ENCODE measurements at regions of chr11 and their contacts with region 1.

Region 1: GRCh38 chr11:10878408-10879214 is 20.8 kb upstream of the ZBED5 start:
- DNase-seq: peak; percentile 69
- H3K4me3 ChIP-seq: no peak overlapping the region
- H3K27ac ChIP-seq: no peak overlapping the region
- H3K4me1 ChIP-seq: no peaks in the 10 kb centered on the region
- H3K27me3 ChIP-seq: no peaks in the 10 kb centered on the region
- CTCF ChIP-seq: peak; percentile 68 to 77
- POLR2A ChIP-seq: no peak

Region 2: GRCh38 chr11:10808553-10809372 is 69.8 kb before region 1 on chr11 and contains the start of gene EIF4G2:
- CTCF ChIA-PET with region 1: interaction called, 11 read pairs
- POLR2A ChIA-PET with region 1: interaction called, 5 read pairs
- dilution Hi-C with region 1: no loop called
- intact Hi-C with region 1: no loop called
- DNase-seq: peak; percentile 99
- H3K4me3 ChIP-seq: peak within 1 kb of the TSS; percentile 88 to 97 (median 97)
- H3K27ac ChIP-seq: peak within 1 kb of the TSS; percentile 97
- H3K4me1 ChIP-seq: peaks cover 39% of the 10 kb centered on the region
- H3K27me3 ChIP-seq: no peaks in the 10 kb centered on the region
- CTCF ChIP-seq: no peak
- POLR2A ChIP-seq: peak; percentile 100
- total RNA-seq, gene EIF4G2: 1,175 and 1,194 TPM in 2 replicates

Region 3: GRCh38 chr11:10866893-10867331 is 11.7 kb before region 1 on chr11:
- CTCF ChIA-PET with region 1: interaction called, 28 read pairs
- POLR2A ChIA-PET with region 1: no interaction called
- dilution Hi-C with region 1: no loop called
- intact Hi-C with region 1: no loop called
- DNase-seq: no peak
- H3K4me3 ChIP-seq: no peak overlapping the region
- H3K27ac ChIP-seq: no peak overlapping the region
- H3K4me1 ChIP-seq: no peaks in the 10 kb centered on the region
- H3K27me3 ChIP-seq: no peaks in the 10 kb centered on the region
- CTCF ChIP-seq: no peak
- POLR2A ChIP-seq: no peak

Region 4: GRCh38 chr11:10899121-10899830 is 20.7 kb after region 1 on chr11:
- CTCF ChIA-PET with region 1: interaction called, 22 read pairs
- POLR2A ChIA-PET with region 1: no interaction called
- dilution Hi-C with region 1: no loop called
- intact Hi-C with region 1: no loop called
- DNase-seq: no peak
- H3K4me3 ChIP-seq: no peak overlapping the region
- H3K27ac ChIP-seq: peak overlapping the region; percentile 95
- H3K4me1 ChIP-seq: peaks cover 25% of the 10 kb centered on the region
- H3K27me3 ChIP-seq: no peaks in the 10 kb centered on the region
- CTCF ChIP-seq: no peak
- POLR2A ChIP-seq: no peak

Region 5: GRCh38 chr11:10911907-10912306 is 33.3 kb after region 1 on chr11:
- CTCF ChIA-PET with region 1: interaction called, 19 read pairs
- POLR2A ChIA-PET with region 1: no interaction called
- dilution Hi-C with region 1: no loop called
- intact Hi-C with region 1: loop called (anchors 5 kb)
- DNase-seq: peak; percentile 34
- H3K4me3 ChIP-seq: no peak overlapping the region
- H3K27ac ChIP-seq: no peak overlapping the region
- H3K4me1 ChIP-seq: peaks cover 17% of the 10 kb centered on the region
- H3K27me3 ChIP-seq: no peaks in the 10 kb centered on the region
- CTCF ChIP-seq: no peak
- POLR2A ChIP-seq: no peak

Region 6: GRCh38 chr11:10925144-10925926 is 46.7 kb after region 1 on chr11:
- CTCF ChIA-PET with region 1: interaction called, 22 read pairs
- POLR2A ChIA-PET with region 1: no interaction called
- dilution Hi-C with region 1: no loop called
- intact Hi-C with region 1: no loop called
- DNase-seq: no peak
- H3K4me3 ChIP-seq: no peak overlapping the region
- H3K27ac ChIP-seq: no peak overlapping the region
- H3K4me1 ChIP-seq: peaks cover under 1% of the 10 kb centered on the region
- H3K27me3 ChIP-seq: peaks cover 4 to 5% of the 10 kb centered on the region in 2 experiments
- CTCF ChIP-seq: no peak
- POLR2A ChIP-seq: no peak

Region 7: GRCh38 chr11:11028017-11028692 is 149.5 kb after region 1 on chr11:
- CTCF ChIA-PET with region 1: interaction called, 10 read pairs
- POLR2A ChIA-PET with region 1: no interaction called
- dilution Hi-C with region 1: no loop called
- intact Hi-C with region 1: loop called (anchors 2 kb)
- DNase-seq: peak; percentile 52
- H3K4me3 ChIP-seq: no peak overlapping the region
- H3K27ac ChIP-seq: no peak overlapping the region
- H3K4me1 ChIP-seq: peaks cover 8% of the 10 kb centered on the region
- H3K27me3 ChIP-seq: peaks cover 4 to 6% of the 10 kb centered on the region in 2 experiments
- CTCF ChIP-seq: peak; percentile 70 to 81
- POLR2A ChIP-seq: no peak